Sigmoid colon (tissue), 7 donors: ENCODE measurements at regions of chr9 and their contacts with region 1.

Region 1: DNA sequence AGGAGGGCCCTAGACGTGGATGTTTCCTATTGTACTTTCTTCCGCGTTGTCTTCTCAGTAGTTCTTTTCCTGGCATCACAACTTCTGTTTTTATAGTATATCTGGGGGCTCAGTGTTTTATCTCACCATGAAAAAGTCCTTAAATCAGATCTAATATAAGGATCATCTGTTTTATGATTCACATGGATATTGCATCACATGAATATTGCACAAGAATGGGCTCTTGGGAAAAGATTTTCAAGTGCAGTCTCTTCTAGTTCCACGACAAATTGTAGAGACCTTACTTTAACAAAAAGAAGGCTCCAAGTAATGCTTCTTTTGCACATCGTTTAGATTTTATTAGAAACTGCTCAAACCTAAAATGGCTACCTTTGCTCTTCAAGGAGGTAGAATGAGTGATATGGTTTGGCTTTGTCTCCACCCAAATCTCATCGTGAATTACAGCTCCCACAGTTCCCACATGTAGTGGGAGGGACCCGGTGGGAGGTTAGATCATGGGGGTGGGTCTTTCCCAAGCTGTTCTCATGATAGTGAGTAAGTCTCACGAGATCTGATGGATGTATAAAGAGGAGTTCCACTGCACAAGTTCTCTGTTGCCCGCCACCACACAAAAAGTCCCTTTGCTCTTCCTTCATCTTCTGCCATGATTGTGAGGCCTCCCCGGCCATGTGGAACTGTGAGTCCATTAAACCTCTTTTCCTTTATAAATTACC is 53.7 kb upstream of the FAM120A start:
- DNase-seq: no peak
- H3K4me3 ChIP-seq: no peak overlapping the region
- H3K27ac ChIP-seq: no peak overlapping the region
- H3K4me1 ChIP-seq: no peaks in the 10 kb centered on the region
- H3K27me3 ChIP-seq: no peaks in the 10 kb centered on the region
- CTCF ChIP-seq: no peak
- EP300 ChIP-seq: no peak
- POLR2A ChIP-seq: no peak

Region 2: GRCh38 chr9:92820964-92821363 is 576.9 kb before region 1 on chr9:
- intact Hi-C with region 1: no loop called
- DNase-seq: no peak
- H3K4me3 ChIP-seq: no peak overlapping the region
- H3K27ac ChIP-seq: no peak overlapping the region
- H3K4me1 ChIP-seq: no peaks in the 10 kb centered on the region
- H3K27me3 ChIP-seq: peaks cover 0 to 22% (median 0%) of the 10 kb centered on the region in 3 donors
- CTCF ChIP-seq: no peak
- EP300 ChIP-seq: no peak
- POLR2A ChIP-seq: no peak

Region 3: DNA sequence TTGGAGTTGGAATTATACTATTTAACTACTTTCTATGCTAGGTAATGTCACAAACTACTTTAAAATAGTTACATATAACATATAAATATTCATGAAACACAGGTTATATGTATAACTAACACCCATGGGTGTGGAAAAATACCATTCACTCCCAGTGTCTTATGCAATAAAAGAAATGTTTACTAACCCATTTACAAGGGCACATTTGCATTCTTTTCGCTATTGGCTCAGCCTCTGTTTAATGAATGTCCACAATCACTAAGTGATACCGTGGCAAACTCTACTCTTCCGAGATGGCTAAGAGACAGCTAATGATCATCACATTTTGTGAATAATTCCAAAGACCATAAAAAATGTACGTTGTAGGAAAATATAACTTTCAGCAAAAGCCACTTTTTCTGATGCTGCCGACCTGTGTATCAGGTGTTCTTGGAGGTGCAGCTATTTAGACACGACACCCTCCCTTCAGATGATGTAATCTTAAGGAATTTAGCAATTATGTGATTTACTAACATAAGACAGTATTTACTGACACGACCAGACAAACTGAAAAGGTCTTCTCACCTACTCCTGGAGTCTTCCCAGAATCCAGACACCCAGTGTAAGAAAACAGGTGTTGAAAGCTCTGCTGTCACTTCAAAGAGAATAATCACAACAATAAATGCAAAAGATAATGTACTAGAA is 68.0 kb before region 1 on chr9:
- intact Hi-C with region 1: loop called (anchors 10 kb)
- DNase-seq: no peak
- H3K4me3 ChIP-seq: no peak overlapping the region
- H3K27ac ChIP-seq: no peak overlapping the region
- H3K4me1 ChIP-seq: no peaks in the 10 kb centered on the region
- H3K27me3 ChIP-seq: no peaks in the 10 kb centered on the region
- CTCF ChIP-seq: no peak
- EP300 ChIP-seq: no peak
- POLR2A ChIP-seq: no peak